ENCODE measurements at regions of chr19 and their contacts with region 1.

Region 1: DNA sequence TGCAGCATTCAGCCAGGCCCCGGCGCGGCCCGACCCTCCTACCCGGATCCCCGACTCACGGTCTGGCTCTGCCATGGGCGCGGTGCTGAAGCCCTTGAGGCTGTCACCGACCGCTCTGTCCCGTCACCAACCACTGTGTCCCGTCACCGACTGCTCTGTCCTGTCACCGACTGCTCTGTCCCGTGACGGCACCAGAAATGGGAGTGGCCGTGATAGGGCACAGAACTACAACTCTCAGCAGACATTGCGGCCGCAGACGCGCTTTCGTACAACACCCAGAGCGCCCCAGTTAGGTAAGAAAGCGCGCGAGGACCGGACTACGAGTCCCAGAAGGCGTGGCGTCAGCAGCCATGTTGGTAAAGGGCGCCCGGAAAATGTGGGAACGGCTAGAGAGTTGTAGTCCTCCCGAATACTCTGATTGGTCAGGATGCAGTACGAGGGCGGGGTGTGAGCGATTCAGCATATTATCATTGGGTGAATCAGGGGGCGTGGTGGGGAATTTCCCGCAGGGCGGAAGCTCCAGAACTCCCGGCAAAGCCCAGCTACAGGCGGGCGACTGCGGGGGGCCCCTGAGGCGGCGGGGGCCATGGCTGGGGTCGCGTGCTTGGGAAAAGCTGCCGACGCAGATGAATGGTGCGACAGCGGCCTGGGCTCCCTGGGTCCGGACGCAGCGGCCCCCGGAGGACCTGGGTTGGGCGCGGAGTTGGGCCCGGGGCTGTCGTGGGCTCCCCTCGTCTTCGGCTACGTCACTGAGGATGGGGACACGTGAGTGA is at the starts of genes NFKBIB and SIRT2:
- DNase-seq: peak; percentile 99
- H3K4me3 ChIP-seq: peak within 1 kb of the TSS; percentile 87
- H3K27me3 ChIP-seq: no peaks in the 10 kb centered on the region
- CTCF ChIP-seq: no peak
- polyA plus RNA-seq, gene NFKBIB: 12.8 and 20.6 TPM in 2 replicates
- polyA plus RNA-seq, gene SIRT2: 44.4 and 71.8 TPM in 2 replicates

Region 2: DNA sequence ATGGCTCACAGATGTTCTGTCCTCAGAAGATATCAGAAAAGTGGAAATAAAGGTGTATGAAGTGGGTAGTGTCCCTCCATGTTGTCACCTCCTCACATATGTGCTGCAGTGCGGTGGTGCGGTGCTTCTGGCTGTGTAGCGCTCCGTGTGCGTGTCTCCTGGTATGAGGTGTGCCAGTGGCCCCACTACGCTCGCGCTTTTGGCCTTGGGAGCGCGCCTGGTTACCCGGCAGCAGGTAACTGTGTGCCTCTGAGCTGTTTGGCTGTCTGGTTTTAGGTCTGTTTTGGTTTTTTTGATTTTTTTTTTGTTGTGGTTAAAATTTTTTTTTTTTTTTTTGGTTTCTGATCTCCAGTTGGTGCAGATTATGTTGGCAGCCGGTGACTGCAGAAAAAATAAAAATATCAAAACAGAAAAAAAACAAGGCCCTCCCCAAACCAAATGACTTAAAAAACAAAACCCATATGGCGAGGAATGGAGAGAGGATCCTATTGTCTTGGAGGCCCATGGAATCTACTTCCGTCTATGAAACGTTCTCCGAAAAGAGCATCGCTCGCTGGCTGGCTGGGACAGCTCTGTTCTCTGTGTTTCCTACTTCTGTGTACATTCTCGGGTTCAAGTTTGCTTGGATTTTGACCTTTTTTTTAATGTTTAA is 57.7 kb before region 1 on chr19:
- CTCF ChIA-PET with region 1: no interaction called
- POLR2A ChIA-PET with region 1: interaction called, 15 read pairs
- DNase-seq: no peak
- H3K4me3 ChIP-seq: no peak overlapping the region
- H3K27me3 ChIP-seq: no peaks in the 10 kb centered on the region
- CTCF ChIP-seq: no peak